Activated CD4-positive, alpha-beta memory T cell treated with anti-CD3 and anti-CD28 coated beads, Interleukin-2, amount 10 ng/mL, durations not matched to agents 7 days and 5 days (primary cell): ENCODE measurements at regions of chr20 and their contacts with region 1.

Region 1: DNA sequence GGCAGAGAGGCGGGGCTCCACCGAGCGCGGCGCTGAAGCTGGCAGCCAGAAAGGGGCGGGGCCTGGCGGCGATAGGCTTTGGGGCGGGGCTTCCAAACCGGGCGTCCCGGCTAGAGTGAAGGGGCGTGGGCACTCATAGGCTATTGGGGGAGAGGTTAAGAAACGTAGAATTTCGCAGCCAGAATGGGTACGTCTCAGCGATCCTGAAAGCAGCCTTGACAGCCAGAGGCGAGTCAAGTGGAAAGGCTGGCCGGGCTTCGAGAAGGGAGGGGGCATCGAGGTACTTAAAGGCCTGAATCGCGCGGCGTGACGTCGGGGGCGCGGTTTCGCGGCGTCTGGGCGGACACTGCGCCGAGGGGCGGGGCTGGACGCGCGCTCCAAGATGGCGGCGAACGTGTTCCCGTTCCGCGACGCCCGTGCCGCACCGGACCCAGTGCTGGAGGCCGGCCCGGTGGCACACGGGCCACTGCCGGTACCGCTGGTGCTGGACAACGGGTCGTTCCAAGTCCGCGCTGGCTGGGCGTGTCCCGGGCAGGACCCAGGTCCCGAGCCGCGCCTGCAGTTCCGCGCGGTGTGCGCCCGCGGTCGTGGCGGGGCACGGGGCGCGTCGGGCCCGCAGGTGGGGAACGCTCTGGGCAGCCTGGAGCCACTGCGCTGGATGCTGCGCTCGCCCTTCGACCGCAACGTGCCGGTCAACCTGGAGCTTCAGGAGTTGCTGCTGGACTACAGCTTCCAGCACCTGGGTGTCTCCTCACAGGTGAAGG is at the start of gene ACTR5:
- DNase-seq: peak; percentile 97
- H3K4me3 Mint-ChIP-seq: peak within 1 kb of the TSS; percentile 94
- H3K27ac Mint-ChIP-seq: peak within 1 kb of the TSS; percentile 92
- H3K4me1 Mint-ChIP-seq: peaks cover 27% of the 10 kb centered on the region
- H3K27me3 Mint-ChIP-seq: peaks cover 9% of the 10 kb centered on the region
- total RNA-seq, gene ACTR5: 9.4 to 9.9 TPM

Region 2: DNA sequence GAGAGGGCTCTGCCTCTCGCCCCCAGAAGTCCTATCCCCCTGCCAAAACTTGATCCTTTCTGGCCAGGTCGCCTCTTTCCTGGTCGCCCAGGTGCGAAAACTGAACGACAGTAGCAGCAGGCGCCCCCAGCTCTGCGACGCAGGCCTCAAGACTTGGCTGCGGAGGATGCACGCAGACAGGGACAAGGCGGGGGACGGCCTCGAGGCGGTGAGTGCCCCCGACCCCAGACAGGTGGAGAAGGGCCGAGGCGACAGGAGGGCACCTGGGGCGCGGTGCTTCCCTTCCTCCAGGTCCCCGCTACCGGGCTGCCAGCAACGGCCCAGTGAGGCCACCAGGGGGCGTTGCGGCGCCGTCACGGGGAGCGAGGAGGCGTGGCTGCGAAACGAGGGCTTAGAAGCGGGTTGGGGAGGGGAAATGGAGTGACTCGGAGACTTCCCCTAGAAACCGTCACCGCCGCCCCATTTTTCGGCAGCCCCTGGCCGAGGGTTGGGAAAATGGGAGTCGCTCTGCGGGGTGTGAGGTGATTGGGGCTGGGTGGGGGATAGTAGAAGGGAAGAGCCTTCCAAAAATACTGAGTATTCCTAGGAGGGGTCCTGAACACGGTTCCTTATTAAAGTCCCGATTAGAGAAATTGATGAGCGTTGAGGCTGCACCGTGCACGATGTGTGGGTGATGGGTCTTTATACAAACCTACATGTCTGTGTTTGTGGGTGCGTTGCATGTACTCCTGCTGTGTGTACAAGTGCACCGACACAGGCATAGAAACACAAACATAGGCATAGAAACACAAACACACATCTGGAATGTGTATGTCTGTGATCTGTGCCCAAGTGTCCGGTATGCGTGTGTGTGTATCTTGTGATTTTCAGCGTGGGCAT is 102.1 kb before region 1 on chr20:
- CTCF ChIA-PET with region 1: interaction called, 15 read pairs
- POLR2A ChIA-PET with region 1: interaction called, 3 read pairs
- DNase-seq: peak; percentile 92
- H3K4me3 Mint-ChIP-seq: peak overlapping the region; percentile 67
- H3K27ac Mint-ChIP-seq: no peak overlapping the region
- H3K4me1 Mint-ChIP-seq: peaks cover 7% of the 10 kb centered on the region
- H3K27me3 Mint-ChIP-seq: peaks cover 57% of the 10 kb centered on the region

Region 3: GRCh38 chr20:38658879-38659596 is 89.2 kb before region 1 on chr20:
- CTCF ChIA-PET with region 1: interaction called, 11 read pairs
- POLR2A ChIA-PET with region 1: no interaction called
- DNase-seq: peak; percentile 27
- H3K4me3 Mint-ChIP-seq: no peak overlapping the region
- H3K27ac Mint-ChIP-seq: no peak overlapping the region
- H3K4me1 Mint-ChIP-seq: no peaks in the 10 kb centered on the region
- H3K27me3 Mint-ChIP-seq: peaks cover 18% of the 10 kb centered on the region

Region 4: GRCh38 chr20:38893565-38894090 is 145.3 kb after region 1 on chr20:
- CTCF ChIA-PET with region 1: interaction called, 33 read pairs
- POLR2A ChIA-PET with region 1: interaction called, 4 read pairs
- DNase-seq: peak; percentile 81
- H3K4me3 Mint-ChIP-seq: no peak overlapping the region
- H3K27ac Mint-ChIP-seq: peak overlapping the region; percentile 83
- H3K4me1 Mint-ChIP-seq: peaks cover 59% of the 10 kb centered on the region
- H3K27me3 Mint-ChIP-seq: no peaks in the 10 kb centered on the region